ENCODE measurements at regions of chr1 and their contacts with region 1.

Region 1: GRCh38 chr1:110455151-110455550 is 4.2 kb downstream of the PROK1 start:
- DNase-seq: no peak
- H3K4me3 ChIP-seq: no peak overlapping the region
- H3K27ac ChIP-seq: no peak overlapping the region
- H3K4me1 ChIP-seq: no peaks in the 10 kb centered on the region
- H3K27me3 ChIP-seq: peaks cover 0 to 38% (median 0%) of the 10 kb centered on the region in 4 donors
- CTCF ChIP-seq: no peak
- EP300 ChIP-seq: no peak
- POLR2A ChIP-seq: no peak

Region 2: DNA sequence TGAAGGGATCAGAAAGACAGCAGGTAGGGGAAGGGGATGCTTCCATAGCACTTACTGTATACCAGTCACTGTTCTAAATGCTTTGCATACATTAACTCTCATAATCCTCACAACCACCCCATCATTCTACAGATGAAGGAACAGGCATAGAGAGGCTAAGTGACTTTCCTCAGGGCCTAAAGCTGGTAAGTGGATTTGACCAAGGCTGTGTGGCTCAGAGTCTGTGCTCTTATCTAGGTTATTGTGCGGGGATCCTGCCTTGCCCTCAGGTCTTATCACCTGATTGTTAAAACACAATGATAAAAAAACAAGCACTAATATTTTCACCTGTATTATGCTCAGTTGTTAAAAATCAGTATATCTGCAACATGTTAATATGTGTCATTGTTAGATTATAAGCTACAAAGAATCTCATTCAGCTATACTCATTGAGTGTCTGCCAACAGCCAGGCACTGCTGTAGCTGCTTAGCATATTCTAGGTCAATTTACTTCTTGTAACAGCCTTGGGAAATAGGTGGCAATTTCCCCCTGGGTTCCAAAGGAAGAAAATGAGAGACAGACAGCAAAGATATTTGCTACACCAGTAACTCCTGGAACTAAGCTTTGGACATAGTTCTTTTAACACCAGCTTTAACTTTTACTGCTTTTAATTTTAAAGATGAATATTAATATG is 154.6 kb before region 1 on chr1:
- intact Hi-C with region 1: loop called (anchors 5 kb)
- DNase-seq: no peak
- H3K4me3 ChIP-seq: no peak overlapping the region
- H3K27ac ChIP-seq: no peak overlapping the region
- H3K4me1 ChIP-seq: no peaks in the 10 kb centered on the region
- H3K27me3 ChIP-seq: peaks cover 0 to 28% (median 0%) of the 10 kb centered on the region in 4 donors
- CTCF ChIP-seq: no peak
- EP300 ChIP-seq: no peak
- POLR2A ChIP-seq: no peak

Region 3: GRCh38 chr1:110420874-110421793 is 34.0 kb before region 1 on chr1:
- intact Hi-C with region 1: no loop called
- DNase-seq: no peak
- H3K4me3 ChIP-seq: no peak overlapping the region
- H3K27ac ChIP-seq: no peak overlapping the region
- H3K4me1 ChIP-seq: peaks cover 0 to 4% (median 0%) of the 10 kb centered on the region in 4 donors
- H3K27me3 ChIP-seq: no peaks in the 10 kb centered on the region
- CTCF ChIP-seq: no peak
- EP300 ChIP-seq: no peak
- POLR2A ChIP-seq: no peak

Measured in esophagus muscularis mucosa (tissue), 4 donors.